H1 (cell line): ENCODE measurements at regions of chr16 and their contacts with region 1.

Region 1: DNA sequence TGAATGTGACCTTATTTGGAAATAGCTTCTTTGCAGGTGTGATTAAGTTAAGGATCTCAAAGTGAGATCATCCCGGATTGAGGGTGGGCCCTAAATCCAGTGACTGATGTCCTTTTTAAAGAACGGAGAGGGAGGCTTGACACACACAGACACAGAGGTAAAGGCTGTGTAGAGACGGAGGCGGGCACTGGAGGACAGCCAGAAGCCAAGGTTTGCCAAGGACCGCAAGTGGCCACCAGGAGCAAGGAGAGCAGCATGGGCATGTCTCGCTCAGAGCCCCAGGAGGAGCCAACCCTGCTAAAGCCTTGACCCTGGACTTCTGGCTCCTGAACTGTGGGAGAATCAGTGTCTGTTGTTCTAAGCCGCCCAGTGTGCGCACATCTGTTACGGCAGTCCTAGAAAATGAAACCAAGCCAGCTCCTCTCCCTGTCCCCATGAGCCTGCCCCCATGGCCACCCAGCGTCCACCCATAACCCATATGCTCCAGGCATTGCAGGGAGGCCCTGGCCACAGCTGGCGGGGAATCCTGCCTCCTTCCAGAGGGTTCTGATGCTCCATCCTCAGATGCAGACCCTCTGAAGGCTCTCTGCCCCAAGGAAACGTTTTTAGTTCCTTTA is 15.2 kb downstream of the CNGB1 start:
- DNase-seq: no peak
- H3K4me3 ChIP-seq: no peak overlapping the region
- H3K27ac ChIP-seq: no peak overlapping the region; the same call in 1 of the 2 replicates
- H3K4me1 ChIP-seq: peaks cover 0 to 10% (median 5%) of the 10 kb centered on the region in 4 experiments; a peak in 6 of 7 replicates
- H3K27me3 ChIP-seq: no peaks in the 10 kb centered on the region; a peak in 1 of 7 replicates
- CTCF ChIP-seq: peak in 2 of 3 experiments; percentile 5 to 12; a peak in 2 of 4 replicates
- EP300 ChIP-seq: no peak
- POLR2A ChIP-seq: no peak
- RAD21 ChIP-seq: no peak

Region 2: DNA sequence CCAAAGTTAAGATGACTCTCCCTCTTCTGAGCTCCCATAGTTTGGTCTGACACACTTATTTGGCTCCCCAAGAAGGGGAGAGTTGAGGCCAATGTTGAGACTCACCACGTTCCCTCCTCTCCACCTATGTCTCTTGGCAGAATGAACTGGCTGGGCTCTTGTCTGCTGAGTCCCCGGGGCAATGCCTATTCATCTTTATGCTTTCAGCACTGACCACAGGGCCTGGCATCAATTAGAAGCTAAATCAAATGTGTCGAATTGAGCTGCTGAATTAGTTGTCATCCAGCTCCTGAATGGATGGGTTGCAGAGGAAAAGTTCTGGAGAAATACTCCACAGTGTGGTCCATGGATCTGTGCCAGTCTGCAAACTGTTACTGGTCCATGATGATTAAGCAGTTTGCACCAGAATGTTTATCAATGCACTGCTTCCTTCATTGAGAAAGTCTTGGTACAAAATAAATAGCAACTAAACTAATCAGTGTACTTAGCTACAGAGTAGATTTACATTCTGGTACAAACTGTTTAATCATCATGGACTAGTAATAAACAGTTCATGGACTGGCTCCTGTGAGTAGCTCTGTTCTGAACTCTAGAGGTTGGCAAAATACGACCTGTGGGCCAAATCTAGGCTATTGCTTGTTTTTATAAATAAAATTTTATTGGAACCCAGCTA is 10.6 kb after region 1 on chr16:
- CTCF ChIA-PET with region 1: interaction called, 10 read pairs
- POLR2A ChIA-PET with region 1: no interaction called
- DNase-seq: no peak
- H3K4me3 ChIP-seq: no peak overlapping the region
- H3K27ac ChIP-seq: no peak overlapping the region
- H3K4me1 ChIP-seq: no peaks in the 10 kb centered on the region
- H3K27me3 ChIP-seq: no peaks in the 10 kb centered on the region
- CTCF ChIP-seq: no peak
- EP300 ChIP-seq: no peak
- POLR2A ChIP-seq: no peak
- RAD21 ChIP-seq: no peak

Region 3: GRCh38 chr16:57994778-57995177 is 39.1 kb after region 1 on chr16:
- CTCF ChIA-PET with region 1: interaction called, 12 read pairs
- POLR2A ChIA-PET with region 1: no interaction called
- DNase-seq: no peak
- H3K4me3 ChIP-seq: no peak overlapping the region
- H3K27ac ChIP-seq: no peak overlapping the region
- H3K4me1 ChIP-seq: peaks cover 4 to 12% (median 7%) of the 10 kb centered on the region in 4 experiments; a peak in 6 of 7 replicates
- H3K27me3 ChIP-seq: peaks cover 0 to 3% (median 0%) of the 10 kb centered on the region in 4 experiments; a peak in 2 of 7 replicates
- CTCF ChIP-seq: peak; percentile 64 to 67 (median 64)
- EP300 ChIP-seq: no peak
- POLR2A ChIP-seq: no peak
- RAD21 ChIP-seq: peak; percentile 52 to 67